ENCODE measurements at regions of chr4 and their contacts with region 1.

Region 1: DNA sequence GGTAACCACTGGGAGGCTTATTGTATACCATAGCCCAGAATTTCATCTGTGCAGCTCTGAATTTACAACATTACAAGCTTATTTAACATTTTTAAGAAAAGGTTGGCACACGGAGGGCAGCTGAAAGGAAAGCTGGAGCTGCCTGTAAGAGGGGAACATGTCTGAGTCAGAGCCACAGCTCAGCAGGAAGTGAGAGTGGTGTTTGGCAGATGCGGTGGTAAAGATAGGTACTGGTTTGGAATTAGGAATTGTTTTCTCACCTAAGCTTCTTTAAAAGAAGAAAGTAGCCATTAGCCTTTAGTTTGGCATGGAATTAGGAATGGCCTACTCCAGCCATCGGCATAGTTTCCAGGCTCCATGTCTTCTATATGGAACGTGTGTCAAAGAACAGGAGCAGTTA is 172.5 kb upstream of the ANXA3 start:
- DNase-seq: no peak
- ATAC-seq: no peak
- H3K4me3 ChIP-seq: no peak overlapping the region
- H3K4me3 Mint-ChIP-seq: no peak overlapping the region
- H3K27ac ChIP-seq: no peak overlapping the region
- H3K27ac Mint-ChIP-seq: no peak overlapping the region
- H3K4me1 ChIP-seq: no peaks in the 10 kb centered on the region
- H3K4me1 Mint-ChIP-seq: no peaks in the 10 kb centered on the region
- H3K27me3 ChIP-seq: no peaks in the 10 kb centered on the region
- H3K27me3 Mint-ChIP-seq: peaks cover 0 to 4% of the 10 kb centered on the region in 2 donors

Region 2: GRCh38 chr4:77777135-77777807 is 601.8 kb before region 1 on chr4:
- CTCF ChIA-PET with region 1: no interaction called
- POLR2A ChIA-PET with region 1: no interaction called
- DNase-seq: no peak
- ATAC-seq: peak in 1 of 4 experiments; percentile 7
- H3K4me3 ChIP-seq: no peak overlapping the region
- H3K4me3 Mint-ChIP-seq: peak overlapping the region in 1 of 3 donors; percentile 24
- H3K27ac ChIP-seq: no peak overlapping the region
- H3K27ac Mint-ChIP-seq: peak overlapping the region; percentile 25 to 41
- H3K4me1 ChIP-seq: peaks cover 9 to 13% of the 10 kb centered on the region in 2 experiments
- H3K4me1 Mint-ChIP-seq: peaks cover 60 to 69% (median 68%) of the 10 kb centered on the region in 3 donors
- H3K27me3 ChIP-seq: no peaks in the 10 kb centered on the region
- H3K27me3 Mint-ChIP-seq: no peaks in the 10 kb centered on the region

Region 3: GRCh38 chr4:78584863-78585547 is 206.0 kb after region 1 on chr4:
- CTCF ChIA-PET with region 1: no interaction called
- POLR2A ChIA-PET with region 1: no interaction called
- DNase-seq: no peak
- ATAC-seq: no peak
- H3K4me3 ChIP-seq: no peak overlapping the region
- H3K4me3 Mint-ChIP-seq: no peak overlapping the region
- H3K27ac ChIP-seq: no peak overlapping the region
- H3K27ac Mint-ChIP-seq: no peak overlapping the region
- H3K4me1 ChIP-seq: no peaks in the 10 kb centered on the region
- H3K4me1 Mint-ChIP-seq: no peaks in the 10 kb centered on the region
- H3K27me3 ChIP-seq: no peaks in the 10 kb centered on the region
- H3K27me3 Mint-ChIP-seq: peaks cover 0 to 2% of the 10 kb centered on the region in 2 donors

Region 4: DNA sequence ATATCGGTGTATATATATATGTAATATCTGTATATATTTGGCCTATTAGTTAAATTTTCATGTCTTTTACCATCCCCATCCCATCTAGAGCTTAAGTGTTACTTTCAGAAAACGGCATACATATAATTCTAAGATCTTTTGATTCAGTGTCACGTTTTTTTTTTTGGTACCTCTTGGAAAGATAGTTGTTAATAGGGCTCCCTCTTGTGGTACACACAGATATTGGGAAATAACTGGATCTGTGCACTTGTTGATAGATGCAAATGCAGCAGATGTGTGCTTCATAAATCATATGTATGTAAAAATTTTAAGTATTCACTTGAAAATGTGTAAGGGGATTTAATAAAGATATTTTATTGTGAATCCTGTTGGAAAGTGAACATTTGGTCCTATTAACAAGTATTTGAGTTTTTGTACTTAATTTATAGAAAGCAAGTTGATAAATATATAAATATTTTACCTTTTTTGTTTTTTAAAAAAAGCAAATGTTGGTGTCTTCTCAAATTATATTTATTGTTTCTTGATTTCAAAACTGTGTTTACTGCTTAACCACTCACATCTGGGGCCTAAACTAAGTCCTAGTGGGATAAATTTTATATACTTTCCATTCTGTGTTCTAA is 485.5 kb after region 1 on chr4:
- CTCF ChIA-PET with region 1: interaction called in 1 of 2 experiments, 10 read pairs
- POLR2A ChIA-PET with region 1: no interaction called
- DNase-seq: peak in 11 of 35 experiments; percentile 2 to 79 (median 15)
- ATAC-seq: peak in 3 of 4 experiments; percentile 38 to 59 (median 48)
- H3K4me3 ChIP-seq: no peak overlapping the region
- H3K4me3 Mint-ChIP-seq: no peak overlapping the region
- H3K27ac ChIP-seq: no peak overlapping the region
- H3K27ac Mint-ChIP-seq: no peak overlapping the region
- H3K4me1 ChIP-seq: no peaks in the 10 kb centered on the region
- H3K4me1 Mint-ChIP-seq: peaks cover 0 to 2% (median 1%) of the 10 kb centered on the region in 3 donors
- H3K27me3 ChIP-seq: no peaks in the 10 kb centered on the region
- H3K27me3 Mint-ChIP-seq: no peaks in the 10 kb centered on the region